ENCODE measurements at regions of chr16 and their contacts with region 1.

Region 1: DNA sequence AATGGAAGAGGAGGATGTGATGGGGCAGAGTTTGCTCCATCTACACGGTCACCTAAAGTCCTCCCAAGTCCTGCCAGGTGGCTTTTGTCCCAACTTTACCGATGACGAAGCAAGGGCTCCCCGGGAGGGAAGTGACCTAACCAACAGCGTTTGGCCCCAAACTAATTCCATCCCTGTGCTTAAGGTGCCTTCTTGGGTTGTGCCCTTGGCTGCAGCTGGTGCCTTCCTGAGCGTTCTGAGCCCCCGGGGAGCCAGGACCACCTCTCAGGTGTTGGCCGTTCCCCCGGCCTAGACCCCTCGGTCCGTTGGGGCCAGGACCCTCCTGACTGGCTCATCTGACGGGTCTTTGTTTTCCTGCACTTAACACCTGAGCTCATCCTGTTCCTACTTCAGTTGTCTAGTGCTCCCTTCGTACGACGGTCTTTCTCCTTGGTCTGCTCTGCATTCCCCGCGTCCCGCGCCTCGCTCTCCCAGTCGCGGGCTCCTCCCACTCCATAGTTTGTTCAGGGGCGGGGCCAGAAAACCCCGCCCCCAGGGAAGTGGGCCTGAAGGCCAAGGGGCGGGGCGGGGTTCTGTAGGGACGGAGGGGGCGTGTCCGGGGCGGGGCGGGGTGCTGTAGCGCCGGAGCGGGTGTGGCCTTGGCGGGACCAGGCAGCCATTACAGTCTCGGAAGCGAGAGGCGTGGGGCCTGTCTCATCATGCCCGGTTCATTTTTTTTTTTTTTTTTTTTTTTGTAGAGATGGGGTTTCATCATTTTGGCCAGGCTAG is 822 bp upstream of the ZSCAN10 start:
- DNase-seq: peak; percentile 95
- ATAC-seq: peak; percentile 42
- H3K4me3 Mint-ChIP-seq: peak overlapping the region; percentile 93
- H3K27ac Mint-ChIP-seq: peak overlapping the region; percentile 99
- H3K4me1 Mint-ChIP-seq: peaks cover 61% of the 10 kb centered on the region
- H3K27me3 Mint-ChIP-seq: no peaks in the 10 kb centered on the region; the same call in 1 of the 2 replicates
- CTCF ChIP-seq: no peak

Region 2: GRCh38 chr16:3003582-3004302 is 96.2 kb before region 1 on chr16:
- CTCF ChIA-PET with region 1: interaction called, 6 read pairs
- POLR2A ChIA-PET with region 1: interaction called, 12 read pairs
- DNase-seq: peak; percentile 99
- ATAC-seq: peak; percentile 85
- H3K4me3 Mint-ChIP-seq: peak overlapping the region; percentile 42
- H3K27ac Mint-ChIP-seq: no peak overlapping the region
- H3K4me1 Mint-ChIP-seq: peaks cover 37% of the 10 kb centered on the region
- H3K27me3 Mint-ChIP-seq: no peaks in the 10 kb centered on the region
- CTCF ChIP-seq: no peak

Region 3: GRCh38 chr16:3045357-3045728 is 54.6 kb before region 1 on chr16:
- CTCF ChIA-PET with region 1: interaction called, 10 read pairs
- POLR2A ChIA-PET with region 1: interaction called, 4 read pairs
- DNase-seq: peak; percentile 60
- ATAC-seq: peak; percentile 18
- H3K4me3 Mint-ChIP-seq: peak overlapping the region; percentile 89
- H3K27ac Mint-ChIP-seq: peak overlapping the region; percentile 74
- H3K4me1 Mint-ChIP-seq: peaks cover 13% of the 10 kb centered on the region
- H3K27me3 Mint-ChIP-seq: peaks cover 26% of the 10 kb centered on the region
- CTCF ChIP-seq: no peak

Region 4: GRCh38 chr16:3112058-3112880 is 12.4 kb after region 1 on chr16 and contains the start of gene ZNF205:
- CTCF ChIA-PET with region 1: interaction called, 68 read pairs
- POLR2A ChIA-PET with region 1: interaction called, 6 read pairs
- DNase-seq: peak; percentile 88
- ATAC-seq: peak; percentile 94
- H3K4me3 Mint-ChIP-seq: peak within 1 kb of the TSS; percentile 88
- H3K27ac Mint-ChIP-seq: peak within 1 kb of the TSS; percentile 94
- H3K4me1 Mint-ChIP-seq: peaks cover 27% of the 10 kb centered on the region
- H3K27me3 Mint-ChIP-seq: no peaks in the 10 kb centered on the region
- CTCF ChIP-seq: no peak
- total RNA-seq, gene ZNF205: 17.7 to 22.7 TPM (median 21.3 TPM) in 3 replicates

Region 5: GRCh38 chr16:3134564-3135417 is 34.9 kb after region 1 on chr16 and contains the start of gene ZNF213:
- CTCF ChIA-PET with region 1: interaction called, 60 read pairs
- POLR2A ChIA-PET with region 1: interaction called, 14 read pairs
- DNase-seq: peak; percentile 94
- ATAC-seq: peak; percentile 94
- H3K4me3 Mint-ChIP-seq: peak within 1 kb of the TSS; percentile 98
- H3K27ac Mint-ChIP-seq: peak within 1 kb of the TSS; percentile 99
- H3K4me1 Mint-ChIP-seq: peaks cover 17% of the 10 kb centered on the region
- H3K27me3 Mint-ChIP-seq: no peaks in the 10 kb centered on the region
- CTCF ChIP-seq: no peak
- total RNA-seq, gene ZNF213: 8.9 to 11.6 TPM (median 10.3 TPM) in 3 replicates

Region 6: GRCh38 chr16:3158471-3159314 is 58.8 kb after region 1 on chr16:
- CTCF ChIA-PET with region 1: interaction called, 5 read pairs
- POLR2A ChIA-PET with region 1: interaction called, 19 read pairs
- DNase-seq: peak; percentile 87
- ATAC-seq: peak; percentile 52
- H3K4me3 Mint-ChIP-seq: peak overlapping the region; percentile 91
- H3K27ac Mint-ChIP-seq: peak overlapping the region; percentile 88
- H3K4me1 Mint-ChIP-seq: peaks cover 6% of the 10 kb centered on the region
- H3K27me3 Mint-ChIP-seq: peaks cover 32% of the 10 kb centered on the region
- CTCF ChIP-seq: no peak

Region 7: GRCh38 chr16:3198334-3199072 is 98.6 kb after region 1 on chr16:
- CTCF ChIA-PET with region 1: no interaction called
- POLR2A ChIA-PET with region 1: no interaction called
- DNase-seq: no peak
- ATAC-seq: no peak
- H3K4me3 Mint-ChIP-seq: no peak overlapping the region
- H3K27ac Mint-ChIP-seq: no peak overlapping the region
- H3K4me1 Mint-ChIP-seq: no peaks in the 10 kb centered on the region
- H3K27me3 Mint-ChIP-seq: peaks cover 74% of the 10 kb centered on the region
- CTCF ChIP-seq: no peak

Measured in WTC11 (cell line).